PC-3 (cell line): ENCODE measurements at regions of chr4 and their contacts with region 1.

Region 1: DNA sequence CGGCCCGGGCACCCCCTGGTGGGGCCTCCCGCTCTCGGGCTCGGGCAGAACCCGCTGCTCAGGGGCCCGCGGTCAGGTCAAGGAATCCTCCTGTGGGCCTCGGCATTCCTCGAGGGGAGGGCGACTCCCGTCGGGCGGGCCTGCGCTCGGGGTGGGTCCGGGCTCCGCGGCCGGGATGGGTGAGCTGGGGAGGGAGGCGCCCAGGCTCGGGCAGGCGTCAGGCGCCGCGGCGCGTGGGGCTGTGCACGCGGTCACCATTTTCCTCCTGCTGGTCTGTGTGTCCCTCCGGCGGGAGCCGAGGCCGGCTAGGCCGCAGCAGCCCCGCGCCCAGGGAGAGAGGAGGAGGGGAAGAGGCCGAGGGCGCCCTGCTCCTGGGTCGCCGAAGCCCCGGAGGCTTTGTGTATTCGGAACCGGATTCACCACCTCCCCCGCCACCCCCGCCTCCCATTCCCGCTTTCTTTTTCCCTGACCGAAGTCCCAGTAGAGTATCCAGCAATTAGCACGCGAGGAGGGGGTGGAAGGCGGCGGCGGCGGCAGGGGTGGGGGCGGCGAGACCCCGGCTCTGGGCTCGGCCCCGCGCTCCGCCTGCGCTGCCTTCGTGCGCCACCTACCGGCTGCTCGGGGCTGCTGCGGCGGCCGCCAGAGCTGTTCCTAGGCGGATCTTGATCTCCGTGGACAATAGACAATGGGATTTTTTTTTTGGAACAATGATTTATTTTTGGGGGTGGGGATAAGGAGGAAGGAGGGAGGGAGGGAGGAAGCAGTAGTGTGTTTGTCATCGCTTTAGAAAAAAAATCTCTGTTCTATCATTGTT is 99.0 kb upstream of the MAML3 start:
- DNase-seq: peak; percentile 78
- ATAC-seq: peak; percentile 73
- H3K4me3 ChIP-seq: peak overlapping the region; percentile 59
- H3K27ac ChIP-seq: peak overlapping the region; percentile 77
- H3K4me1 ChIP-seq: peaks cover 59% of the 10 kb centered on the region
- H3K27me3 ChIP-seq: no peaks in the 10 kb centered on the region
- CTCF ChIP-seq: peak; percentile 79

Region 2: DNA sequence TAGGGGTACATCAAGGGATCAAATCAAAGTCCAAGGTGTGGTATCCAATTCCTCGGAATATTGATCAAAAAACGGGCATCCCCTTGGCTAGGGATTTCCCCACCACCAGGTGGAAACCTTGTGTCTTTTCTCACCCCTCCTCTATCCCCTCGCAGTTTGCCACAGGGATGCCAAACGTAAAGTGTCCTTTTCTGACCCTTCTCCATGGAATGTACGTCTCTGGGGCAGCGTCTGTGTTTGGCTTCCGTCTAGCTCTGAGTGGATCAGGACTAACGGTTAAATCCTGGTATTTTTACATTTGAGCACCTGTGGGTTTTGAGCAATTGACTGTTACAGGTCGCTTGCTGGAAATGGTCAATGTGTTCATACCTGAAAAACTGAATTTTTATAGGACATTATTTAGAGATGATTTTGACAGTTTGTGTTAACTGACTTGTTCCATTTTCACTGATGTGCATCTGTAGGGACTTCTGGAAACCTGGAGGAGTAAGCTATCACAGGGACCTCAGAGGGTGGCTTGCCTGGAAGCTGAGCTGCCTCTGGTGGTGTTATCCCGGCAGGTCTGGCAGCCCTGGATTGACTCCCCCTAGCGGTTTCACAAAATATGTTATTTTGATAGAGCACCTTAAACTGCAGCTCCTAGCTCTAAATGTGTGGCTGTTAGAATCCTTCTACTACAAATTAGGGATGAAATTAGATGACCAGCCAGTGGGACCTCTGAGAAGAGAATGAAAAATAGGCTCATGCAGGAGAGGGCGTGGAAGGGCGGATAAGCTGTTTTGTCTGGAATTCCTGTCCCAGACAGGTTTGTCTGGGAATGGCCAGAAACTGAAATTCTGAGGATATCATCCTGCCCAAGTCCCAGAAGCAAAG is 596.1 kb before region 1 on chr4:
- CTCF ChIA-PET with region 1: no interaction called
- POLR2A ChIA-PET with region 1: no interaction called
- intact Hi-C with region 1: loop called (anchors 5 kb)
- DNase-seq: peak; percentile 80
- ATAC-seq: peak; percentile 87
- H3K4me3 ChIP-seq: peak overlapping the region; percentile 53; the same call in 1 of the 2 replicates
- H3K27ac ChIP-seq: 0 out of 2 replicates have a peak overlapping the region, but pooled peaks have one; percentile 30
- H3K4me1 ChIP-seq: peaks cover 14% of the 10 kb centered on the region
- H3K27me3 ChIP-seq: no peaks in the 10 kb centered on the region
- CTCF ChIP-seq: peak; percentile 72

Region 3: DNA sequence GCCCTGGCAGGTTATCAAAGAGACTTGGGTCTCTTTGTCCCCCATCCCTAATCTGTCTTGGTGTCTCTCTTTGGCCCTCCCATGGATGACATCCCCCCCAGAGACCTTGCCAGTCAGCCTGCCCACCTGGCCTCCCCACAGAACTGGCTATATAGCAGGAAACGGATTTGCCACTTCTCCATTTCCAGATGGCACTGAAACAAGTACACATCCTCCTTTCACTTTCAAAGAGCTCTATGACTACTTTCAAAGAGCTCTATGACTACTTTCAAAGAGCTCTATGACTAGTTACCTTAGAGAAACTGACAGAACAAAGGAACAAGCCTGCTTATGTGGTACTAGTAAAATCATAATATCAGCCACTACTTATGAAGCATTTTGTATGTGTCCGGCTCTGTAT is 274.3 kb before region 1 on chr4:
- CTCF ChIA-PET with region 1: no interaction called
- POLR2A ChIA-PET with region 1: interaction called, 18 read pairs
- intact Hi-C with region 1: no loop called
- DNase-seq: no peak
- ATAC-seq: no peak
- H3K4me3 ChIP-seq: no peak overlapping the region
- H3K27ac ChIP-seq: no peak overlapping the region
- H3K4me1 ChIP-seq: 0 out of 2 replicates have a peak, but pooled peaks cover 6% of the 10 kb centered on the region
- H3K27me3 ChIP-seq: no peaks in the 10 kb centered on the region
- CTCF ChIP-seq: no peak

Region 4: GRCh38 chr4:140099983-140100382 is 153.0 kb before region 1 on chr4:
- CTCF ChIA-PET with region 1: interaction called, 3 read pairs
- POLR2A ChIA-PET with region 1: no interaction called
- intact Hi-C with region 1: loop called (anchors 1 kb)
- DNase-seq: peak; percentile 63
- ATAC-seq: peak; percentile 37; the same call in 1 of the 2 replicates
- H3K4me3 ChIP-seq: no peak overlapping the region
- H3K27ac ChIP-seq: peak overlapping the region; percentile 98
- H3K4me1 ChIP-seq: peaks cover 79% of the 10 kb centered on the region
- H3K27me3 ChIP-seq: no peaks in the 10 kb centered on the region
- CTCF ChIP-seq: no peak

Region 5: GRCh38 chr4:140116442-140117104 is 136.4 kb before region 1 on chr4:
- CTCF ChIA-PET with region 1: no interaction called
- POLR2A ChIA-PET with region 1: no interaction called
- intact Hi-C with region 1: no loop called
- DNase-seq: peak; percentile 70
- ATAC-seq: peak; percentile 92
- H3K4me3 ChIP-seq: no peak overlapping the region
- H3K27ac ChIP-seq: peak overlapping the region; percentile 61
- H3K4me1 ChIP-seq: peaks cover 13% of the 10 kb centered on the region
- H3K27me3 ChIP-seq: no peaks in the 10 kb centered on the region
- CTCF ChIP-seq: no peak

Region 6: DNA sequence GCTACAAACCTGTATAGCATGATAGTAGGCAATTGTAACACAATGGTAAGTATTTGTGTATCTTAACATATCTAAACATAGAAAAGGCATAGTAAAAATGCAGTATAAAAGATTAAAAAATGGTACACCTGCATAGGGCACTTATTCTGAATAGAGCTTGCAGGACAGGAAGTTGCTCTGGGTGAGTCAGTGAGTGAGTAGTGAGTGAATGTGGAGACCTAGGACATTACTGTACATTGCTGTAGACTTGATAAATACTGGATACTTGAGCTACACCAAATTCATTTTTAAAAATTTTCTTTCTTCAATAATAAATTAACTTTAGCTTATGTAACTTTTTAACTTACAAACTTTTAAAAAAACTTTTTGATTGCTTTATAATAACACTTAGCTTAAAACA is 30.8 kb before region 1 on chr4:
- CTCF ChIA-PET with region 1: no interaction called
- POLR2A ChIA-PET with region 1: no interaction called
- intact Hi-C with region 1: no loop called
- DNase-seq: peak; percentile 63
- ATAC-seq: peak; percentile 89
- H3K4me3 ChIP-seq: no peak overlapping the region
- H3K27ac ChIP-seq: no peak overlapping the region
- H3K4me1 ChIP-seq: peaks cover 4% of the 10 kb centered on the region; the same call in 1 of the 2 replicates
- H3K27me3 ChIP-seq: no peaks in the 10 kb centered on the region
- CTCF ChIP-seq: no peak

Region 7: GRCh38 chr4:140326395-140326993 is 73.5 kb after region 1 on chr4:
- CTCF ChIA-PET with region 1: interaction called, 4 read pairs
- POLR2A ChIA-PET with region 1: no interaction called
- intact Hi-C with region 1: loop called (anchors 1 kb)
- DNase-seq: peak; percentile 59
- ATAC-seq: peak; percentile 86
- H3K4me3 ChIP-seq: no peak overlapping the region
- H3K27ac ChIP-seq: no peak overlapping the region
- H3K4me1 ChIP-seq: no peaks in the 10 kb centered on the region
- H3K27me3 ChIP-seq: no peaks in the 10 kb centered on the region
- CTCF ChIP-seq: peak; percentile 82